ENCODE measurements at regions of chr2 and their contacts with region 1.

Region 1: DNA sequence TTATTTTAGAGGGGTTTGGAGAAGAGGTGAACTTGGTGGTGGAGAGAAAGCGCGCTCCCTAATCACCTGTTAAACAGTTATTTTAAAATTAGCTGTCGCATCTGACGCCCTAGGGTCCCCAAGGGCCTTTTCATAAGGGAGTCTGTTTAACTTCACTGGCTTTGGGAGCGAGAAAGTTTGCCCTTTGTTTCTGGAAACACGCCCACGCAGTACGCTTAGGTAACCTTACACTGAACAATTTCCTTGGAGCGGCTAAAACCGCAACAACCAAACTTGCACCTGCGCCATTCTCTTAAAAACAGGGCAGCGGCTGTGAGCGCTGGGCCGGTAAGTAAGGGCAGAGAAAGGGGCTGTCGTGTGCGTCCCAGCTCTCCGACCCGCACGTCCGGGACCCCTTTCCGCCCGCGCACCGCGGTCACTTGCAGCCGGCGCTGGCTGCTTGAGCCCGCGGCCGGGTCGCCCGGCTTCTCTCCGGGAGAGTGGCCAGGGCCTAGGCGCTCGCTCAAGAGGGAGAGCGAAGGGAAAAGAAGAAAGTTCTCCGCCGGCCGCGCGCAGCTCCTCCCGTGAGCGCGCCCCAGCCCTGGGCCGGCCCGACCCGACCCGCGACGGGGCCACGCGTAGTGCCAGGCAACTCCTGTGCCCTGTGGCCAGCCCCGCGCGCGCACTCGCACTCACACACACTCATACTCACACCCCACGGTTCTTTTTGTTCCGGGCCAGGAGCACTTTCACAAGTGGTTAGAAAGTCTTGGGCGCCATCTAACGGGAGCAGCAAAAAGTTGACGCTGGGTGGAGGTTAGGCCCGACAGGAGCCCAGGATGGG is 19.2 kb downstream of the POU3F3 start:
- DNase-seq: peak; percentile 84
- H3K4me3 ChIP-seq: peak overlapping the region; percentile 57
- H3K27ac ChIP-seq: no peak overlapping the region
- H3K4me1 ChIP-seq: no peaks in the 10 kb centered on the region
- H3K27me3 ChIP-seq: peaks cover 50% of the 10 kb centered on the region
- CTCF ChIP-seq: peak; percentile 79

Region 2: DNA sequence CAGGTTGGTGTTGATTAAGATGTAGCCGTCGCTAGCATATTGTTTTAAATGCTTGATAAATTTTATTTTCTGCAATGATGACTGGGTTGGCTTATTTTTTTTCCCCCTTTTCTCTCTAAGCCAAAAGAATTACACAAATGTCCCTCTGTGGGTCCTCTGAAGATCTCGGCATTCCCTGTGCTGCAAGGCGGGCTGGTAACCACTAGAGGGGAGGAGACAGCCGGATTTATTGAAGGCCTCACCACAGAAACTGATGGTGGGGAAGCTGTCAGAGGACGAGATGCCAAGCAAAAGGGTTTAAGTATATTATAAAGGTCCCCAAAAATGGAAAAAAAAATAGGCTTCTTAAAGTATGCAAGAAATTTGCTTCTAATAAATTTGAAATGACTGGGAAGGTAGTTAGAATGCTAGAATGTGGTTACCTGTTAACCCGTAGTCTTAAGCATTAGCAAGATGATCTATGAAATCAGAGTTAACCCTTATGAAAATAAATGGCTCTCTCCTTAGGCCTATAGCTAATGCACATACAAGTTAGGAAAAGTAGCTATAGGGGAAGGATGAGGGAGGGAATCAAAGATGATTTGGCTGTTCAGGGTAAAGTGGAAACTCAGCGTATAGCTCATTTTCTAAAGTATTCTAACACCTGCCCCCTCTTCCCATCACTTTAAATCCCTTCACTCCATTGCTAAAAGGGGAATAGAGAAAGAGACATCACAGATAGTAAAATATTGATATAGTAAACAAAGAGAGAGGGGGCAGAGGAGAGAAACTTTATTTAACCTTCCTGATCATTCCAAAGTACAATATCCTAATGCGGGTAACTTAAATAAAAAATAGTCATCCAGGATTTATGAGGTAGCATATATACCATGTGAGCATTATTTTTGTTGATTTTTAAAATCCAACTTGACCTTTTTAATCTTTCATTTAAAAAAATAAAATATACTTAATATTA is 913.6 kb before region 1 on chr2:
- CTCF ChIA-PET with region 1: no interaction called
- POLR2A ChIA-PET with region 1: no interaction called
- intact Hi-C with region 1: loop called (anchors 5 kb)
- DNase-seq: peak; percentile 41
- H3K4me3 ChIP-seq: no peak overlapping the region
- H3K27ac ChIP-seq: no peak overlapping the region
- H3K4me1 ChIP-seq: no peaks in the 10 kb centered on the region
- H3K27me3 ChIP-seq: no peaks in the 10 kb centered on the region
- CTCF ChIP-seq: peak; percentile 70

Region 3: GRCh38 chr2:104749856-104750460 is 123.1 kb before region 1 on chr2:
- CTCF ChIA-PET with region 1: no interaction called
- POLR2A ChIA-PET with region 1: no interaction called
- intact Hi-C with region 1: no loop called
- DNase-seq: no peak
- H3K4me3 ChIP-seq: no peak overlapping the region
- H3K27ac ChIP-seq: no peak overlapping the region
- H3K4me1 ChIP-seq: no peaks in the 10 kb centered on the region
- H3K27me3 ChIP-seq: no peaks in the 10 kb centered on the region
- CTCF ChIP-seq: no peak

Measured in A673 (cell line).